MCF 10A (cell line): ENCODE measurements at regions of chr22 and their contacts with region 1.

Region 1: DNA sequence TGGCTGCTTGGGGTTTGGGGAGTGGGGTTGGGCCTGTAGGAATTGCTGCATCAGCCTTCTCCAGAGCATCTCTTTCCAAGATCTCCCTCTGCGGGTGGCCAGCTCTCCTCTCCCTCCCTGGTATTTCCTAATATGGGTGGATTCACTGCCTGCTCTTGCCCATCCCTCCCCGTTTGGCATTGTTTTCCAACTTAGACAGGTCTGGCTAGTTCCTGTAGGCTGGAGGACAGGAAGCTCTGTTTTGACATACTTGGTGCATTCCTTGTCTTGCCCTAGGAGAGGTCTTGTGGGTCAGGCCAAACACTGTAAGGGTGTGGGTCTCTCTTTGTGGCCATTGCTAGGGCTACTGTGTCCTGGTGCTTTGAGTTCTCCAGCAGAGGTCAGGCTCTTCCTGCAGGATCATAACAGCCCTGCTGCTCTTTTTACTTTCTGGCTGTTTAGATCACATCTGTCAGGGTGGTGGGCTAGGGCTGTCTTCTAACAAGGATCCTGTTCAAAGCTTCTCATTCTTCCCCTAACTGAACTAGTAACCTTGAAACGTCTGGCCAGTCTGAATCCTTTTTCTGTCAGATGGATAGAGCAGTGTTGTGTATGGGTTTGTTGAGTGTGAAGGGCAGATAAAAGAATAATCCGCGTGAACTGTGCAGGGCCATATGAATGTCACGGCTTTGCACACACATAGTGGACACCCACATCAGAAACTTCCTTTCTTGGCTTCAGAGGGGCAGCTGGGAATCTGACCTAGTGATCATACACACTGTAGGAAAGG is 18.3 kb upstream of the MICALL1 start:
- DNase-seq: peak; percentile 94
- H3K4me3 Mint-ChIP-seq: no peak overlapping the region
- H3K27ac Mint-ChIP-seq: peak overlapping the region; percentile 84
- H3K4me1 Mint-ChIP-seq: peaks cover 16% of the 10 kb centered on the region
- H3K27me3 Mint-ChIP-seq: no peaks in the 10 kb centered on the region
- CTCF ChIP-seq: peak; percentile 56

Region 2: DNA sequence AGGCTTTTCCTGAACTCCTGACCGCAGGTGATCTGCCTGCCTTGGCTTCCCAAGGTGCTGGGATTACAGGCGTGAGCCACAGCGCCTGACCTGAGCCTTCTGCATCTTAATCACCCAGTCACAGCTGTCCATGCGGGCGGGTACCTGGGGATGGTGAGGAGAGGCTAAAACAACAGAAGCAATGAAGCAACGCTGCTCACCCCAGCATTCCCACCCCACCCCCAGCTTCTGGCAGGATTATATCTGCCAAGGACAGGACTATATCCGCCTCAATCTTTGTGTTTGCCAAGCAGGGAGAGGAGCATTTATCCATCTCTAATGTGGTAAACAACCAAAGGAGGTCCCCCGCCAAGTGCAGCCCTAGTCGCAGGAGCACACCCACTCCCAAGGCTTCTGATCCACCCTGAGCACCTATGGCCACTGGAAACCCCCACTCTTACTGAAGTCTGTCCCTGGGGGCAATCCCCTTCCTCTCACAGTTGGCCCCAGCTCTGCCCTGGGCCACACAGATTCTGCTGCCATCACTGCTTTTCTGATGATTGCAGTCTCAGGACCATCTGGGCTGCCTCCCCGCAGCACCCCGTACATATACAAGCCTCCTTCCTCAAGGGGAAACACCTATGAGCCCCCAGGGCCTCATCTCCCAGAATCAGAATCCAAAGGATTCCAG is 299.1 kb before region 1 on chr22:
- CTCF ChIA-PET with region 1: no interaction called
- POLR2A ChIA-PET with region 1: no interaction called
- intact Hi-C with region 1: no loop called
- DNase-seq: no peak
- H3K4me3 Mint-ChIP-seq: no peak overlapping the region
- H3K27ac Mint-ChIP-seq: no peak overlapping the region
- H3K4me1 Mint-ChIP-seq: peaks cover 12% of the 10 kb centered on the region
- H3K27me3 Mint-ChIP-seq: no peaks in the 10 kb centered on the region
- CTCF ChIP-seq: no peak

Region 3: DNA sequence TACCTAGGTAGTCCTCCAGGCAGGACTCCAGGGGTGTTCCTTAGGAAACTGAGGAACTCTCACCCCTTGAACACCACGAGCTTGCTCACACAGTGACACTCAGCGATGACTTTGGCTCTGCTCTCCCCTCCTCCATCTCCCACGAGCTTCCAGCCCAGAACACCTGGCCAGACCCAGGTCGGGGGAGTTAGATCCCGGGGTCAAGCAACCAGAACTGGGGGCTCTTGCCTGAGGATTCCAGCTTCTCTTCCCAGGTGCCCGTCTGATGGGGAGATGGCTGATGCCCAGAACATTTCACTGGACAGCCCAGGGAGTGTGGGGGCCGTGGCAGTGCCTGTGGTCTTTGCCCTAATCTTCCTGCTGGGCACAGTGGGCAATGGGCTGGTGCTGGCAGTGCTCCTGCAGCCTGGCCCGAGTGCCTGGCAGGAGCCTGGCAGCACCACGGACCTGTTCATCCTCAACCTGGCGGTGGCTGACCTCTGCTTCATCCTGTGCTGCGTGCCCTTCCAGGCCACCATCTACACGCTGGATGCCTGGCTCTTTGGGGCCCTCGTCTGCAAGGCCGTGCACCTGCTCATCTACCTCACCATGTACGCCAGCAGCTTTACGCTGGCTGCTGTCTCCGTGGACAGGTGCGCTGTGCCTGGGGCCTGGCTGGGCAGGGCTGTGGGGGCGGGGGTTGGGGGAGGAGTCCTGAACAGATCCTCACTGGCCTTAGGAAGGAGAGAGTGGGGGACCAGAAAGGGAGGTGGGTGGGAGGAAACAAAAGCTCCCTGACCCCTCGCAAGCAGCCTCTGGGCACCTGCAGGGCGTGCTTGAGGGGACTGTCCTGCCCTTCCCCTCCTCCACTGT is 64.4 kb before region 1 on chr22 and contains the start of gene GALR3:
- CTCF ChIA-PET with region 1: no interaction called
- POLR2A ChIA-PET with region 1: no interaction called
- intact Hi-C with region 1: no loop called
- DNase-seq: no peak
- H3K4me3 Mint-ChIP-seq: no peak within 1 kb of the TSS
- H3K27ac Mint-ChIP-seq: no peak within 1 kb of the TSS
- H3K4me1 Mint-ChIP-seq: no peaks in the 10 kb centered on the region
- H3K27me3 Mint-ChIP-seq: no peaks in the 10 kb centered on the region
- CTCF ChIP-seq: no peak
- total RNA-seq, gene GALR3: 0.26 and 0.27 TPM in 2 replicates

Region 4: GRCh38 chr22:37843741-37843990 is 44.1 kb before region 1 on chr22:
- CTCF ChIA-PET with region 1: interaction called, 9 read pairs
- POLR2A ChIA-PET with region 1: interaction called, 11 read pairs
- intact Hi-C with region 1: no loop called
- DNase-seq: peak; percentile 17
- H3K4me3 Mint-ChIP-seq: peak overlapping the region; percentile 82
- H3K27ac Mint-ChIP-seq: no peak overlapping the region
- H3K4me1 Mint-ChIP-seq: peaks cover 5% of the 10 kb centered on the region
- H3K27me3 Mint-ChIP-seq: no peaks in the 10 kb centered on the region
- CTCF ChIP-seq: no peak

Region 5: GRCh38 chr22:37862570-37863325 is 25.0 kb before region 1 on chr22:
- CTCF ChIA-PET with region 1: interaction called, 21 read pairs
- POLR2A ChIA-PET with region 1: no interaction called
- intact Hi-C with region 1: no loop called
- DNase-seq: no peak
- H3K4me3 Mint-ChIP-seq: no peak overlapping the region
- H3K27ac Mint-ChIP-seq: peak overlapping the region; percentile 49
- H3K4me1 Mint-ChIP-seq: peaks cover 10% of the 10 kb centered on the region
- H3K27me3 Mint-ChIP-seq: no peaks in the 10 kb centered on the region
- CTCF ChIP-seq: no peak

Region 6: GRCh38 chr22:37910890-37911743 is 23.3 kb after region 1 on chr22:
- CTCF ChIA-PET with region 1: interaction called, 24 read pairs
- POLR2A ChIA-PET with region 1: interaction called, 189 read pairs
- intact Hi-C with region 1: no loop called
- DNase-seq: no peak
- H3K4me3 Mint-ChIP-seq: no peak overlapping the region
- H3K27ac Mint-ChIP-seq: no peak overlapping the region
- H3K4me1 Mint-ChIP-seq: peaks cover 18% of the 10 kb centered on the region
- H3K27me3 Mint-ChIP-seq: no peaks in the 10 kb centered on the region
- CTCF ChIP-seq: no peak

Region 7: DNA sequence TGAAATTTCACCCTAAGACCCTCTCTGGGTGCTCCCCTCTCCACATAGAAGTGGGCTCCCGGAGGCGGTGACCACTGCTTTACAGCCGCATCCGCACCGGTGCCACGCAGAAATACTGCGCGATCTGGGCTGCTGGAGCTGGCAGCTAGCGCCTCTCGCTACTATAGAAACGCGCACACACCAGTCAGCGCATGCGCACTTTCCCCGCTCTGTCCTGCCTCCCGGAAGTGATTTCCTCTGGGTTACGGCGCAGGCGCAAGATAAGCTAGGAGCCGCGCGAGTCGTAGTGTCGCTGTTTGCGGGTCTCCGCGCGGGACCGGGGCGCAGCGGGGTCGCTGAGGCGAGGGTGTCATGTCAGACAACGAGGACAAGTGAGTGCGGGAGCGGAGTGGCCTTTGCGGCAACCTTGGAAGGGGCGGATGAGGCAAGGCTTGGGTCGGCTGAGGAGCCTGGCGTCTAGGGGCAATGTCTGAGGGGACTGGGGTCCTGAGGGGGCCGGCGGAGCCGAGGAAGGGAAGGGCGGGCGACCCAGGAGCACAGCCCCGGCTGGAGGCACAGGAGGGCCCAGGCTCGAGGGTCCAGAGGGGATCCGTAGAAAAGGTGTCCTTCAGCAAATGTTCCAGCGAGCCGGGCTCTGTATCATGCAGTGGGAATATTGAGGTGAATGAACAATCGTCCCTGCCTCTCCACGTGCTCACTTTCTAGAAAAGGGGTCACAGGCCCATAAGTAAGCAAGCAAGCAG is 65.8 kb after region 1 on chr22 and contains the starts of genes C22orf23 and POLR2F:
- CTCF ChIA-PET with region 1: interaction called, 5 read pairs
- POLR2A ChIA-PET with region 1: interaction called, 11 read pairs
- intact Hi-C with region 1: no loop called
- DNase-seq: peak; percentile 96
- H3K4me3 Mint-ChIP-seq: peak within 1 kb of the TSS; percentile 76
- H3K27ac Mint-ChIP-seq: peak within 1 kb of the TSS; percentile 84
- H3K4me1 Mint-ChIP-seq: peaks cover 18% of the 10 kb centered on the region
- H3K27me3 Mint-ChIP-seq: no peaks in the 10 kb centered on the region
- CTCF ChIP-seq: no peak
- total RNA-seq, gene C22orf23: not detected in 2 replicates
- total RNA-seq, gene POLR2F: 87.5 and 97.6 TPM in 2 replicates